Naive thymus-derived CD4-positive, alpha-beta T cell (primary cell): ENCODE measurements at regions of chr4 and their contacts with region 1.

Region 1: DNA sequence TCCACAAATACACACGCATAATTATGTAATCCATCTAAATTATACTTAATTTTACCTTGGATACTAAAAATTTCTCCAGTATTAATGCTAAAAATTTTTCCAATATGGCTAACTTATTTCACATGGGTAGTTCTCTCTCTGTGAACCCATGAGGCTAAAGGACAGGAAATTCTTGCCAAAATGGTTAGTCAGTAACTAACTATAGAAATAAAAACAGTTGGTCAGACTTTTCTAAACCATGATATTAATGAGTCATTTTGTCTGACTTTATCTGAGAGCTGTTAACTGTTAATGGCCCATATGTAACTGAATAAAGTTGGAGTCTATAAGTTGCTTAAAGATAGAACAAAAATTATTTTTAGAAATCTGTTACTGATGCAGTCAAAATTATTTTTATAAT is 549.4 kb downstream of the TLL1 start:
- DNase-seq: no peak
- ATAC-seq: no peak
- H3K4me3 ChIP-seq: no peak overlapping the region
- H3K4me3 Mint-ChIP-seq: no peak overlapping the region
- H3K27ac ChIP-seq: no peak overlapping the region
- H3K27ac Mint-ChIP-seq: no peak overlapping the region
- H3K4me1 ChIP-seq: no peaks in the 10 kb centered on the region
- H3K4me1 Mint-ChIP-seq: no peaks in the 10 kb centered on the region
- H3K27me3 ChIP-seq: no peaks in the 10 kb centered on the region
- H3K27me3 Mint-ChIP-seq: no peaks in the 10 kb centered on the region

Region 2: GRCh38 chr4:166481055-166481454 is 58.6 kb after region 1 on chr4:
- CTCF ChIA-PET with region 1: no interaction called
- POLR2A ChIA-PET with region 1: no interaction called
- intact Hi-C with region 1: loop called in 1 of 2 experiments (anchors 10 kb)
- DNase-seq: no peak
- ATAC-seq: no peak
- H3K4me3 ChIP-seq: no peak overlapping the region
- H3K4me3 Mint-ChIP-seq: no peak overlapping the region
- H3K27ac ChIP-seq: no peak overlapping the region
- H3K27ac Mint-ChIP-seq: no peak overlapping the region
- H3K4me1 ChIP-seq: no peaks in the 10 kb centered on the region
- H3K4me1 Mint-ChIP-seq: no peaks in the 10 kb centered on the region
- H3K27me3 ChIP-seq: no peaks in the 10 kb centered on the region
- H3K27me3 Mint-ChIP-seq: no peaks in the 10 kb centered on the region